Endothelial cell of umbilical vein (primary cell): ENCODE measurements at regions of chr3 and their contacts with region 1.

Region 1: DNA sequence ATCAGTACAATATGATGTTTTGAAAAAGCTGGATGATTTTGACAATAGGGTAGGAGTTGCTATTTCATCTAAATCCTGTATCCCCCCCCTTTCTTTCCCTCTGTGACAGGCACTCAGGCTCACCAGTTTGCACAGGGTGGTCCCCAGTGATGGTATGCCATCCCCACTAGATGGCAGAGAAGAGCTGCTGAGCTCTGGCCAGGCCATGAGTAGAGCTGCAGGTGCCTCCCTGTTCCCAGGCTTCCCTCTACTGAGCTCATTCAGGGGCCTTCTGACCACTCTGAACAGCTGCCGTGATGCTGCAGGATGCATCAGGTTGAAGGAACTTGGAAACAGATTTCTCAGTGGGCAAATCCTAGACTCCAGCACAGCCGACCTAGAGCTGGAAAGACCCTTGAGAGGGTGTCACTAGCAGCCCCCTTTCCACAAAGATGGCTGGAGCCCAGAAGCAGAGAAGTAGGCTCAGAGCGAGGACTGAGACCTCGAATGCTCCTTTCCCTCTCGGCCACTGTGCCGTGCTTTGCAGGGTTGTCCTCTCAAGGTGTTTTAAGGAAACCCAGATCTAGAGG is 45.1 kb downstream of the EFCAB12 start:
- DNase-seq: peak; percentile 71
- H3K4me3 ChIP-seq: no peak overlapping the region
- H3K27ac ChIP-seq: no peak overlapping the region
- H3K4me1 ChIP-seq: peaks cover 19% of the 10 kb centered on the region
- H3K27me3 ChIP-seq: no peaks in the 10 kb centered on the region
- CTCF ChIP-seq: peak; percentile 93 to 95
- POLR2A ChIP-seq: peak; percentile 34

Region 2: GRCh38 chr3:128293930-128294329 is 1089.4 kb before region 1 on chr3:
- CTCF ChIA-PET with region 1: no interaction called
- POLR2A ChIA-PET with region 1: no interaction called
- dilution Hi-C with region 1: no loop called
- intact Hi-C with region 1: no loop called
- DNase-seq: no peak
- H3K4me3 ChIP-seq: no peak overlapping the region
- H3K27ac ChIP-seq: no peak overlapping the region
- H3K4me1 ChIP-seq: no peaks in the 10 kb centered on the region
- H3K27me3 ChIP-seq: no peaks in the 10 kb centered on the region
- CTCF ChIP-seq: no peak
- POLR2A ChIP-seq: no peak

Region 3: GRCh38 chr3:129371041-129371826 is 12.1 kb before region 1 on chr3:
- CTCF ChIA-PET with region 1: interaction called, 10 read pairs
- POLR2A ChIA-PET with region 1: no interaction called
- dilution Hi-C with region 1: no loop called
- intact Hi-C with region 1: no loop called
- DNase-seq: no peak
- H3K4me3 ChIP-seq: no peak overlapping the region
- H3K27ac ChIP-seq: no peak overlapping the region
- H3K4me1 ChIP-seq: no peaks in the 10 kb centered on the region
- H3K27me3 ChIP-seq: no peaks in the 10 kb centered on the region
- CTCF ChIP-seq: no peak
- POLR2A ChIP-seq: no peak

Region 4: DNA sequence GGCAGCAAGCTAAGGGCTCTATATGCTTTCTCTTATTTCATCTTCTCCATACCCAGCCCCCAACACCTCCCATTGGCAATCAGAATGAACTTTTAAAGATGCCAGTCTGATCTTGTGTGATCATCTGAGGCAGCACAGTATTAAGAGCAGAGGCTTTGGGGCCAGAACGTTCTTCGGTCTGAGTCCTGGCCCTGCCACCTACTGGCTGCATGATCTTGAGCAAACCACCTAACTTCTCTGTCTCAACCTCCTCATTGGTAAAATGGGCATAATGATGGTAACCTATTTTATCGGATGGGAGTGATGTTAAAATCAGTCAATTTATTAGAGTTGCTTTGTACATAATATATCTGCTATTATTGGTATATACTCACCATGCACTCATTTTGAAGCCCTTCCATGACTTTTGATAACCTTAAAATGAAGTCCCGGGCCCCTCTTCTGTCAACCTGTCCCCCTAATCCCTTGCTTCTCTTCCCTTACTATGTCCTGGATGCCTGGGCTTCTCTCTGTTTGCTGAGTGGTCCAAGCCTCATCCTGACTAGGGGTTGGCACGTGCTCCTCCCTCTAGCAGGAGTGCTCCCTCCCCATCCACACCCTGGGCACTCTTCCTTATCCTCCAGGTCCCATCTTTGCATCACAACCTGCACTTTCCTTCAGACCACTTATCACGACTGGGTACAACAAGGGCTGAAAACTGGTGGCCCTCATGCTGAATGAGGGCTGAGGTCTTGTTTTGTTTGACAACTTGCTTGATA is 38.8 kb after region 1 on chr3:
- CTCF ChIA-PET with region 1: interaction called, 27 read pairs
- POLR2A ChIA-PET with region 1: no interaction called
- dilution Hi-C with region 1: no loop called
- intact Hi-C with region 1: no loop called
- DNase-seq: peak; percentile 19
- H3K4me3 ChIP-seq: no peak overlapping the region
- H3K27ac ChIP-seq: no peak overlapping the region
- H3K4me1 ChIP-seq: peaks cover 6% of the 10 kb centered on the region
- H3K27me3 ChIP-seq: no peaks in the 10 kb centered on the region
- CTCF ChIP-seq: peak in 1 of 2 donors; percentile 25
- POLR2A ChIP-seq: no peak

Region 5: DNA sequence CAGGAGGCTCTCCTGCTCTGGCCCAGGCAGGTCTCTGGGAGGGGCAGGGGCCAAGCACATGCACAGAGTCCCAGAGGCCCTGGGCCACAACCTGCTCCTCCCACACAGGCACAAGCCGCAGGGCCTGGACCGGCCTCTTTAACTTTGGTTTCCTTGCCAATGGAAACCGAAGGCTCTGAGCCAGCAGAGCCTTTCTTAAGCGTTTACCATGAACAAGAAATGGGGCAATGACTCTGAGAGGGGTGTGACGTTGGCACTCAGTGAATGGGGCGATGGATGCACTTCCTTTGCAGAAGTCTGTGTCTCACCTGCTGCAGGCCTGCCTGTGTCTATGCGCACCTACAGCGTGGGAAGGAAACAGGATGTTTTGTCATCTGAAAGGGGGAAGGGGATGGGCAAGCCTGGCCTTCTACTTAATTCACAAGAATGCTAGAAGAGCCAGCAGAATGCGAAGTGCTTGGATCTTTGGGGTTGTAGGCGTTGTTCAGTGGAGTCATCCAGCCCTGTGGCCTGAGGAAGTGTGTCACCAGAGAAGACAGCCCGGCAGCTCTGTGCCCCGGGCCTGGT is 98.5 kb after region 1 on chr3:
- CTCF ChIA-PET with region 1: interaction called, 23 read pairs
- POLR2A ChIA-PET with region 1: no interaction called
- dilution Hi-C with region 1: no loop called
- intact Hi-C with region 1: loop called (anchors 1 kb)
- DNase-seq: peak; percentile 17
- H3K4me3 ChIP-seq: no peak overlapping the region
- H3K27ac ChIP-seq: peak overlapping the region; percentile 69
- H3K4me1 ChIP-seq: peaks cover 11% of the 10 kb centered on the region
- H3K27me3 ChIP-seq: no peaks in the 10 kb centered on the region
- CTCF ChIP-seq: no peak
- POLR2A ChIP-seq: no peak

Region 6: DNA sequence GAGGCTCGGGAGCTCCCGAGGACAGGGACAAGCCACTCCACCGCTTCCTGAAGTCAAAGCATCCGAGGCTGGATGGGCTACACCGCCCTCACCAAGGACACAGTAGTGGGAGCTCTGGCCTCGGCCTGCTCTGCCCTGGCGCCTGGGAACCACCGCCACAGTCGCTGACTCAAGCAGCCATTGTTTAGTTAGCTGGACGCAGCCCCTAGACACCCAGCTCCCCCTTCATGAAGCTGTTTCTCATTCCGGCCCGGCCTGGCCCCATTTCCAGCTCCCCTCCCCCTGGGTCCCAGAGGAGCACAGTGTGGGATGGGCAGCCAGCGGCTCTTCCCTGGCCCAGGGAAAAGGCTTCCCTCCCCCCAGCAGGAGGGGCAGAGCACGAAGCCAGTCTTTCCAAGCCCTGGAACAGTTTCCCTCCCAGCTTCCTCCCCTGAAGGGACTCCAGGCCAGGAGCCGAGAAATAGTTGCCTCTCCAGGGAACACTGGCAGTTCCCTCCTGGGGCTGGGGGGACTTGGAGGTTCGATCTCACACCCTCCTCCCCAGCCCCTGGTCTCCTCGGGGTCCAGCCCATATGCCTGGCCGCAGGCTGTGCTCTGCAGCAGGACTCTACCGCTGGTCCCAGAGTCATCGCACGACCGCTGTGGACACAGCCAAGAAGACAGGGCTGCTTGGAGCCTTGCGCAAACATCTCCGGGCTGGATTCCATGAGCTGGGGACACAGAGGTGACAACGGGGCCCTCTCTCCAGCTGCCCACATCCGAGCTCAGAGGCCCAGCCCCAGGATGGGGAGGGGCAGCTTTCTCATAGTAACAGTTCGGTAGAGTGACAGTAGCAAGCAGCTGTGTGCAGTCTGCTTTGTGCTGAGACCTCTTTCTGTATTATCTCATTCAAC is 213.1 kb after region 1 on chr3:
- CTCF ChIA-PET with region 1: interaction called, 7 read pairs
- POLR2A ChIA-PET with region 1: no interaction called
- dilution Hi-C with region 1: no loop called
- intact Hi-C with region 1: loop called (anchors 5 kb)
- DNase-seq: peak; percentile 98
- H3K4me3 ChIP-seq: peak overlapping the region in 2 of 3 experiments; percentile 1 to 10
- H3K27ac ChIP-seq: peak overlapping the region; percentile 91
- H3K4me1 ChIP-seq: peaks cover 96% of the 10 kb centered on the region
- H3K27me3 ChIP-seq: no peaks in the 10 kb centered on the region
- CTCF ChIP-seq: no peak
- POLR2A ChIP-seq: peak; percentile 45

Region 7: GRCh38 chr3:129934234-129935123 is 551.1 kb after region 1 on chr3:
- CTCF ChIA-PET with region 1: interaction called, 6 read pairs
- POLR2A ChIA-PET with region 1: no interaction called
- dilution Hi-C with region 1: no loop called
- intact Hi-C with region 1: loop called (anchors 2 kb)
- DNase-seq: peak; percentile 47
- H3K4me3 ChIP-seq: no peak overlapping the region
- H3K27ac ChIP-seq: no peak overlapping the region
- H3K4me1 ChIP-seq: peaks cover 3% of the 10 kb centered on the region
- H3K27me3 ChIP-seq: peaks cover 0 to 8% of the 10 kb centered on the region in 2 experiments
- CTCF ChIP-seq: peak; percentile 73 to 88
- POLR2A ChIP-seq: no peak